Heart right ventricle (tissue), 16 donors: ENCODE measurements at regions of chr4 and their contacts with region 1.

Region 1: DNA sequence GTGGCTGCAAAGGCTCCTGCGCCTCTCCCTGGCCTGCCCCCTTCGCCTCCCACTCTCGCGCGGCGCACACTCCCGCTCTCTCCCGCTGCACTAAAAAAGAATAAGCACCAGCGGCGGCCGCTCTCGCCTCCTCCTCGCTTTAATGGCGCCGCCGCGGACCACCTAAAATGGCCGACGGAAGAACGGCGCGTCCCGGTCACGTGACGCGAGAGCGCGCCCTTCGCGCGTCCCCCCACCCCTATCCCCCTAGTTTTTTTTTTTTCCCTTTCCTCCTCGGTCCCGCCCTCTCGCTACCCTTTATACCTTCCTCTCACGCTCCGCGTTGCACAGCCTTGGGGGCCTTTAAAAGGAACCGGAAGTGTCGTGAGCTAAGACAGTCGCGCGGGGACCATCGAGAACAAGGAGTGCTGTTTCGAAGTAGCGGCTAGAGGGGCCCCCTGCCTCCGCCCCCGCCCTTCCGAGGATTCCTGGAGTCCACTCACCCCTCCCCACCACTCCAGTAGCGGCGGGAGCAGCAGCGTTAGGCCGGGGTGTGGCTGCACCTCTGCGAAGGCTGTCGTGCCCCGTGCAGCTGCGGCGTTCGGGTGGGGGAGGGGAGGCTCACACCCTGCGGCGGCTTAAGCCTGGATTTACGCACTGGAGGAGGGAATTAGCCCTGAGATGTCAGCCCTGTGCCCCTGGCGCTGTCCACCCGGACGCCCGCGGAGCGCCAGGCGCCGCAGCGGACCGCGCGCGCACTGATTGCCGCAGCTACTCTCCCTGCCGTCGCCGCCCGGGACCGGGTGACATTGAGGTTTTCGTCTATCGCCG is at the start of gene HNRNPD:
- DNase-seq: peak; percentile 96 to 99
- ATAC-seq: peak; percentile 92 to 98 (median 95)
- H3K4me3 ChIP-seq: peak within 1 kb of the TSS; percentile 66 to 97 (median 92)
- H3K27ac ChIP-seq: peak within 1 kb of the TSS; percentile 95 to 100 (median 99)
- H3K4me1 ChIP-seq: peaks cover 7 to 51% (median 36%) of the 10 kb centered on the region in 9 donors
- H3K27me3 ChIP-seq: no peaks in the 10 kb centered on the region
- CTCF ChIP-seq: peak in 4 of 9 donors; percentile 8 to 28 (median 22)
- total RNA-seq, gene HNRNPD: 117 to 144 (median 126) TPM

Region 2: DNA sequence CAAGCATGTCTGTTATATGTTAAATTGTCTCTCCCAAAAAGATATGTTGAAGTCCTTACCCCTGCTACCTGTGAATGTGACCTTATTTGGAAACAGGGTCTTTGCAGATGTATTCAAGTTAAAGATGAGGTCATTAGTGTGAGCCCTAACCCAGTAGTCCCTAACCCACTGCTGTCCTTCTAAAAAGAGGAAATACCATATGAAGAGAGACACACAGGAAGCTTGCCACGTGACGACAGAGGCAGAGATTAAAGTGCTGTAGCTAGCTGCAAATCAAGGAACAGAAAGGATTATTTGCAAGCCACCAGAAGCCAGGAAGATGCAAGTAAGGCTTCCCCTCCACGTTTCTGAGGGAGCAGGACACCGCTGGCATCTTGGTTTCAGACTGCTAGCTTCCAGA is 150.3 kb before region 1 on chr4:
- intact Hi-C with region 1: no loop called
- DNase-seq: peak in 1 of 2 donors; percentile 8
- ATAC-seq: peak in 4 of 8 donors; percentile 56 to 71 (median 64)
- H3K4me3 ChIP-seq: no peak overlapping the region
- H3K27ac ChIP-seq: peak overlapping the region in 1 of 10 donors; percentile 24
- H3K4me1 ChIP-seq: peaks cover 0 to 15% (median 0%) of the 10 kb centered on the region in 9 donors
- H3K27me3 ChIP-seq: peaks cover 0 to 7% (median 0%) of the 10 kb centered on the region in 7 donors
- CTCF ChIP-seq: no peak

Region 3: DNA sequence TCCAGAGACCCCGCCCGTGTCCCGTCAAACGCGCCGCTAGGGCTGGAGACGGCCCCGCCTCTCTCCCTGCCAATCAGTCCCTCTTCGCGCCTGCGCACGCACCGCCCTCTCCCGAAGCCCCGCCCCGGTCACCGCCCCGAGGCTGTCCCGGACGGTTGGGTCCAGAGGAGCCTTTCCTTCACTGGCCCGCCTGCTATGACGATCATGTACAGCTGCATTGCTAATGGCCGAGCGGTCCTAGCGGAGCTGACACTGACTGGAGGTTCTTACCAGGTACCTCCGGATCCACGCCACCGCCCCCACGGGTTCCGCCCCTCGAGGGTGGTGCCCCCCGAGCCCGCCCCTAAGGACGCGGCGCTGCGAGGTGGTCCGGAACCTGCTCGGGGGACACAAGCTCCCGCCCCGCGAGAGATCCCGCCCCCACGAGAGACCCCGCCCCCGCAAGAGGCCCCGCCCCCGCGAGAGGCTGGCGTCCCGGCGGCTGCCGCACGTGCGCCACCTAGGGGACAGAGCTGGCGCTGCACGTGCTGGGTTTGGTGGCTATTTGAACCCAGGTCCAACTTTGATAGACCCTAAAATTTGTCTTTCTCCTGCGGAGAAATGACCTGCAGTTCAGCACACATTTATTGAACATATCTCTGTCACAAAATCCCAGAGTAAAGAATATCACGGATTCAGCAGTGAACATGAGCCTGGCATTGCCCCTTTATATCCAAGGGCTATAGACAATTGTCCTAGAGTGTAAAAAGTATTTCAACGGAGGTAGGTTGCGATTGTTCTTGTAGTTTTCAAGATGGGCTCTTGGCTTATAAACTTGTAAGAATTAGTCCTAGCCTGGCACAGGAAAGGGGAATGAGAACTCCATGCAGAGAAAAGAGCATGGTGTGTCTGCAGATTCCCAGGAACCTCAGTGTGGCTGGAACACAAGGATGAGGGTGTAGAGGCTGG is 88.9 kb before region 1 on chr4:
- intact Hi-C with region 1: loop called in 3 of 10 experiments (anchors 5 to 10 kb)
- DNase-seq: peak; percentile 99
- ATAC-seq: peak; percentile 99 to 100 (median 100)
- H3K4me3 ChIP-seq: peak overlapping the region in 9 of 10 donors; percentile 29 to 65 (median 51)
- H3K27ac ChIP-seq: peak overlapping the region in 8 of 10 donors; percentile 6 to 68 (median 48)
- H3K4me1 ChIP-seq: peaks cover 0 to 10% (median 4%) of the 10 kb centered on the region in 9 donors
- H3K27me3 ChIP-seq: no peaks in the 10 kb centered on the region
- CTCF ChIP-seq: peak; percentile 90 to 98 (median 96)

Region 4: GRCh38 chr4:82394910-82395309 is 20.9 kb after region 1 on chr4:
- intact Hi-C with region 1: loop called in 1 of 10 experiments (anchors 1 kb)
- DNase-seq: no peak
- ATAC-seq: no peak
- H3K4me3 ChIP-seq: no peak overlapping the region
- H3K27ac ChIP-seq: no peak overlapping the region
- H3K4me1 ChIP-seq: no peaks in the 10 kb centered on the region
- H3K27me3 ChIP-seq: no peaks in the 10 kb centered on the region
- CTCF ChIP-seq: no peak

Region 5: DNA sequence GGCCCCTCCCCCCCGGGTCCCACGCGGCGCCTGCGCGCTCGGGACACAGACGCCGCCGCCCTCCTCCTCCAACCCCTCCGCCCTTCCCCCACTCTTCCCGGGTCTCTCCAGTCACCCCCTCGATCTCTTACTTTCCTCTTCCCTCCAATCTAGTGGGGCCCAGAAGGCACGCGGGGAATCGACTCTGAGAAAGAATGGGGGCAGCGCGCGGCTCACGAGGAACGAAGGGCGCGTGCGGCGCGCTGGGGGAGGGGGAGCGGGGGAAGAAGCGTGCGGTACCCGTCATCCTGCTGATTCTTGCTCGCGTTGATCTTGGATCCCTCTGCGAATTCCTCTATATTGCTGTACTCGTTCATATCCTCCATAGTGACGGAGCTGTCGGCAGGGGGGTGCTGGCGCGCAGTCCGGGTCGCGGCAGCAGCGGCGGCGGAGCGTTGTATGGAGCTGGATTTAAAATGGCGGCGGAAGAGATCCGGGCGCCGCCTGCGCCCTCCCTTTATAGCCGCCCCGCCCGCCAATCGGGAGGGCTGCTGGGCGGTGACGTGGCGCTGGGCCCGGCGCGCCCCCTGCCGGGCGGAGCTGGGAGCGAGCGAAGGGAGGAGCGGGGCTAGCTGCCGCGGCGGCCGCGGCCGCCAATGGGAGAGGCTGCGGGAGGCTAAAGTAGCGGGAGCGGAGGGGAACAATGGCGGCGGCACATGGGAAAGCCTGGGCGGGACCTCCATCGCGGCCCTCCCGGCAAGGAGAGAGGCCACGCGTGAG is 55.1 kb after region 1 on chr4:
- intact Hi-C with region 1: loop called in 9 of 10 experiments (anchors 1 to 5 kb)
- DNase-seq: peak; percentile 91 to 95
- ATAC-seq: peak; percentile 84 to 94 (median 90)
- H3K4me3 ChIP-seq: peak overlapping the region; percentile 80 to 96 (median 89)
- H3K27ac ChIP-seq: peak overlapping the region; percentile 89 to 99 (median 98)
- H3K4me1 ChIP-seq: peaks cover 10 to 62% (median 45%) of the 10 kb centered on the region in 9 donors
- H3K27me3 ChIP-seq: no peaks in the 10 kb centered on the region
- CTCF ChIP-seq: peak; percentile 94 to 99 (median 99)

Region 6: DNA sequence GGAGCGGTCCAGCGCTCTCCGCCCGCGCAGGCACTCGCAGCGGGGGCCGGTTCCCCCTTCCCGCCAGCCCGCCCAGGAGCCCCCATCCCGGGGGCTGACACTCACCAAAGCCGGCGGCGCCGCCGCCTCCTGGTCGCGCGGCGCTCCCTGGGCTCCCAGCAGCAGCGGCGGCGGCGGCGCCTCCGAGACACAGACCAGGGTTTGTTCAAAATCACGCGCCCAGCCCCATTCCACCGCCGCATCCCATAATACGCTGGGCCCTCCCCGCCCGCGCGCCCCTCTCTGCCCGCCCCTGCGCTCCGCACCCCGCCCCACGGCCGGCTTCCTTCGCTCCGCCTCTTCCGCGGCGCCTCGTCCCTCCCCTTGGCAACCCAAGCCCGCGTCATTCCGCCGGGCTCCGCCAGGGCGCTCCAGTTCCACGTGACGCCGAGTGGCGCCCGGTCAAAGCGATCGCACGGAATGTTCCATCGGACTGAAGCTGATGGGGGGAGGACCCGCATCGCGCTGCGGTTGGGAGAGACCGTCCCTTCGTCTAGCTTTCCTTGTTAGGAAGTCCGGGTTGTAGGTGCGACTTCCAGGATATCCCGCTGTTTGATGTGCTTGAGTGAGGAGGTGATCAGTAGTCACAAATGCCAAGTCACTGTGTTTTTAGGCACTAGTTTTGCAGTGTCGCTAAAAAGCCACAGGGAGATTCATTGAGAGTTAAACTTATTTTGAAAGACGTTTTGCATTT is 638.8 kb after region 1 on chr4:
- intact Hi-C with region 1: loop called in 1 of 10 experiments (anchors 10 kb)
- DNase-seq: peak; percentile 96 to 98
- ATAC-seq: peak; percentile 98 to 100 (median 98)
- H3K4me3 ChIP-seq: peak overlapping the region; percentile 66 to 98 (median 79)
- H3K27ac ChIP-seq: peak overlapping the region; percentile 57 to 97 (median 78)
- H3K4me1 ChIP-seq: peaks cover 6 to 45% (median 34%) of the 10 kb centered on the region in 9 donors
- H3K27me3 ChIP-seq: no peaks in the 10 kb centered on the region
- CTCF ChIP-seq: peak; percentile 21 to 66 (median 55)

Region 7: DNA sequence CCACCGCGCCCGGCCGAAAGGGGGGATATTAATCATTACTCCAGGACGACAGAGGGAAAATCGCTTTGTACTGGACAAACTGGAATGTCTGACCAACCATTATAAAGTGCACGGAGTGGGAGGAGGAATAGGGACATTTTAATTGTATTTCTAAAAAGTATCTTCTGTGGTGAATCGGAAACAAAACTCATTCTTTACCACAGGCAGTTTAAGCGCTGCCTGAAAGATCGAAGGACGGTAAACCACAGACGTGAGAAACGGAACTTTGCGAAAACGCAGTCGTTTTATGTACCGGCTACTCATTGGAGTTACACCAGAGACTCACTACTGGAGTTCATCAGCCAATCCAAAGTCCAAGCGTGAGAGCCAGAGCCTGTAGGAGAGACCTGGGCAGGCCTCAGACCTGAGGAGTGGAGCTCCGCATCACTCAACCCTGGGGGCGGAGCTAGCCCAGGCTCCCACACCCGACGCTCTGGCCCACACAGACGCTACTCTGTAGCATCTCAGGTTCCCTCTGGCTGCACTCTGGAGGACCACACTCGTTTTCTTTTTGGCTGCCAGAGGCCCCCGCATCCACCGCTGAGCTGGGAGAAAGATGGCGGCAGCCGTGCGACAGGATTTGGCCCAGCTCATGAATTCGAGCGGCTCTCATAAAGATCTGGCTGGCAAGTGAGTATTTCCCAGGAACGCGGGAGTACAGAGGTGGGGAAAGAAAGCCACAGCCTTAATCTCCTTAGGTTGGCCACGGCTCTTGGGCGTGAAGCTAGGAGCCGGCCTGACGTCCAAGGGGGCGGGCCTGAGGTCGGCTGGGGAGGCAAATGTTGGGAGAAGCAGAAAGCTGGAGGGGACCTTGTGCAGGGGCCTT is 660.8 kb after region 1 on chr4 and contains the start of gene COPS4:
- intact Hi-C with region 1: loop called in 2 of 10 experiments (anchors 5 to 10 kb)
- DNase-seq: peak; percentile 92 to 98
- ATAC-seq: peak; percentile 100
- H3K4me3 ChIP-seq: peak within 1 kb of the TSS; percentile 41 to 92 (median 67)
- H3K27ac ChIP-seq: peak within 1 kb of the TSS; percentile 62 to 95 (median 88)
- H3K4me1 ChIP-seq: peaks cover 0 to 27% (median 22%) of the 10 kb centered on the region in 9 donors
- H3K27me3 ChIP-seq: no peaks in the 10 kb centered on the region
- CTCF ChIP-seq: peak; percentile 36 to 74 (median 52)
- total RNA-seq, gene COPS4: 48.1 to 65.1 (median 57.5) TPM